AG04449 (cell line): ENCODE measurements at regions of chr2 and their contacts with region 1.

Region 1: DNA sequence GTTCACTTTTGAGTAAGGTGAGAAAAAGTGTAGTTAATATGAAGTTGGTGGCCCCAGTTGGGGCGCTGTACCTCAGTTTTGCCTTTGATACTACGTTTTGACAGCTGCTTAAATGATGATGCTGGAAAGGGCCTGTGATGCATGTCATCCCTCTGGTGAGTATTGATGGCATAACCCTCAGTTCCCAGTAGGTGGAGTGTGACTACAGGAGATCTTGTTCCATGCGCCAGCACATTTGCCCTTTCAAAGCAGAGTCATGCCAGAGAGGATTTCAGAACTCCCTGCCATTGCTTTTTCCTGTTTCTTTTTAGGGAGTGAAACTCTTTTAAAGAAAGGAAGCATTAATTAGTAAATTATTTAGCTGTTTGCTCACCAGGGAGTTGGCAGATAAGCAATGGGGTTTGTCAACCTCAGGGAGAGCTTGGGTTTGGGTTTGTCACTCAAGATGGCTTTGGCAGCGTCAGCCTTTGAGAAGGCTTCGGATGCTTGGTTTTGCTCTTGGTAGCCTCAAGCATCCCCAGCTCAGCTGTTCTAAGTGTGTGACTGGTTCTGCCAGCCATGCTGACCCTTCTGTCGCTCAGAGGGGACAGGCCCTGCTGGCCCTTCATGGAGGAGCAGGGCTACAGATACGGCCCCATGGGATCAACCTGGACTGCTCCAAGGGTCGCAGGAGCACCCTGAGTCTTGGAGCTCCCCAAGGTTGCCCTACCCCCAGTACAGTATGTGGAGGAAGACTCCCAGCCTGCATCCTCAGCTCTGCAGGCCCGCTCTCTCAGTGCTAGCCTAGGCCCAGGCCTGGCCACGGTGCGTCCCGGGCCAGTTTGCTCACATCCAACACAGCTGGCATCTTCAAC is 29.1 kb downstream of the ARMC9 start:
- DNase-seq: peak; percentile 34
- H3K4me3 ChIP-seq: no peak overlapping the region
- CTCF ChIP-seq: peak; percentile 86

Region 2: GRCh38 chr2:231110551-231110950 is 117.0 kb before region 1 on chr2:
- CTCF ChIA-PET with region 1: interaction called, 87 read pairs
- POLR2A ChIA-PET with region 1: no interaction called
- DNase-seq: no peak
- H3K4me3 ChIP-seq: no peak overlapping the region
- CTCF ChIP-seq: no peak

Region 3: DNA sequence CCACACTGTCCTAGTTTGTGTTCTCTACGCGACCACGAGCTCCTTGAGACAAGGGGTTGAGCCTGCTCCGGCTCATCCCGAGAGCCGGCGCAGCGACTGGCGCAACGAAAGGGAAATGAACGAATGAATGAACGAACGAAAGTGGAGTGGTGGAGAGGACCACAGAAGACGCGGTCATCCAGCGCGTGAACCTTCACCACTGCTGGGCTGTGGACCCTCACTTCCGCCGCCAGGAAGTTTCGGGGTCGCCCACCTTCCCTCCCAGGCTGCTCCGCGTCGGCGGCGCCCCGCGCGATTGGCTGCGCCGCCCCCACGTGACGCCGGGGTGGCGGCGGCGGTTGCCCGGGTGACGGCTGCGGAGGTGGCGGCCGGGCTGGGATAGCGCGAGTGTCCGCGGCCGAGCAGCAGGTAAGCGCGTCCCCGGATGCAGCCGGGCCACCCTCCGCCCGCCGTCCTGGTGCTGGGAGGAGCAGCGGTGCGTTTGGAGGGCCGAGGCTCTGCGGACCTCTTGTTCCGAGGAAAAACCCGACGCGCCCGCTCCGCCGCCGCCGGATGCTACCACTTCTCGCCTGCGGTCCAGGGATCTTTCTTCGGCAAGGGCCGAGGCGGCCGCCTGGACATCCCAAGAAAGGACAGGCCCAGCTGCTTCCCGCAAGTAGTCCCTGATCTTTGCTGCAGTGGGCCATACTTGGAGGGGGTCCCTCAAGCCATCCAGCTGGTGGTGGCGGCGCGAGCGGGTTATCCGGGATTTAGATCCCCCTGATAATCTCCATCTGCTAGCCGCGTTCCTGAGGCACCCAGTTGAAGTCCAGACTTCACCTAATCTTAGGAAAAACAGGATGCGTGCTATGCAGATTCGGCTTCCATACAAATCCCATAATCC is 29.0 kb before region 1 on chr2 and contains the start of gene ARMC9:
- CTCF ChIA-PET with region 1: interaction called, 19 read pairs
- POLR2A ChIA-PET with region 1: no interaction called
- DNase-seq: no peak
- H3K4me3 ChIP-seq: peak within 1 kb of the TSS; percentile 98
- CTCF ChIP-seq: no peak

Region 4: GRCh38 chr2:231213921-231214642 is 13.5 kb before region 1 on chr2:
- CTCF ChIA-PET with region 1: interaction called, 18 read pairs
- POLR2A ChIA-PET with region 1: no interaction called
- DNase-seq: no peak
- H3K4me3 ChIP-seq: no peak overlapping the region
- CTCF ChIP-seq: no peak

Region 5: GRCh38 chr2:231245253-231246094 is 17.9 kb after region 1 on chr2:
- CTCF ChIA-PET with region 1: interaction called, 57 read pairs
- POLR2A ChIA-PET with region 1: interaction called, 3 read pairs
- DNase-seq: no peak
- H3K4me3 ChIP-seq: no peak overlapping the region
- CTCF ChIP-seq: no peak

Region 6: GRCh38 chr2:231399853-231400680 is 172.5 kb after region 1 on chr2:
- CTCF ChIA-PET with region 1: interaction called, 218 read pairs
- POLR2A ChIA-PET with region 1: no interaction called
- DNase-seq: no peak
- H3K4me3 ChIP-seq: no peak overlapping the region
- CTCF ChIP-seq: no peak

Region 7: GRCh38 chr2:231452799-231453508 is 225.4 kb after region 1 on chr2:
- CTCF ChIA-PET with region 1: interaction called, 124 read pairs
- POLR2A ChIA-PET with region 1: no interaction called
- DNase-seq: no peak
- H3K4me3 ChIP-seq: no peak overlapping the region
- CTCF ChIP-seq: no peak

Region 8: GRCh38 chr2:232030229-232030628 is 802.7 kb after region 1 on chr2:
- CTCF ChIA-PET with region 1: no interaction called
- POLR2A ChIA-PET with region 1: no interaction called
- DNase-seq: no peak
- H3K4me3 ChIP-seq: no peak overlapping the region
- CTCF ChIP-seq: no peak